ENCODE measurements at regions of chr2 and their contacts with region 1.

Region 1: GRCh38 chr2:239401067-239401880 is 454 bp upstream of the HDAC4 start:
- DNase-seq: peak; percentile 99
- H3K4me3 ChIP-seq: peak overlapping the region; percentile 77 to 78
- H3K27ac ChIP-seq: peak overlapping the region; percentile 100
- H3K4me1 ChIP-seq: no peaks in the 10 kb centered on the region
- H3K27me3 ChIP-seq: no peaks in the 10 kb centered on the region
- CTCF ChIP-seq: peak in 2 of 4 experiments; percentile 18 to 30
- POLR2A ChIP-seq: no peak

Region 2: DNA sequence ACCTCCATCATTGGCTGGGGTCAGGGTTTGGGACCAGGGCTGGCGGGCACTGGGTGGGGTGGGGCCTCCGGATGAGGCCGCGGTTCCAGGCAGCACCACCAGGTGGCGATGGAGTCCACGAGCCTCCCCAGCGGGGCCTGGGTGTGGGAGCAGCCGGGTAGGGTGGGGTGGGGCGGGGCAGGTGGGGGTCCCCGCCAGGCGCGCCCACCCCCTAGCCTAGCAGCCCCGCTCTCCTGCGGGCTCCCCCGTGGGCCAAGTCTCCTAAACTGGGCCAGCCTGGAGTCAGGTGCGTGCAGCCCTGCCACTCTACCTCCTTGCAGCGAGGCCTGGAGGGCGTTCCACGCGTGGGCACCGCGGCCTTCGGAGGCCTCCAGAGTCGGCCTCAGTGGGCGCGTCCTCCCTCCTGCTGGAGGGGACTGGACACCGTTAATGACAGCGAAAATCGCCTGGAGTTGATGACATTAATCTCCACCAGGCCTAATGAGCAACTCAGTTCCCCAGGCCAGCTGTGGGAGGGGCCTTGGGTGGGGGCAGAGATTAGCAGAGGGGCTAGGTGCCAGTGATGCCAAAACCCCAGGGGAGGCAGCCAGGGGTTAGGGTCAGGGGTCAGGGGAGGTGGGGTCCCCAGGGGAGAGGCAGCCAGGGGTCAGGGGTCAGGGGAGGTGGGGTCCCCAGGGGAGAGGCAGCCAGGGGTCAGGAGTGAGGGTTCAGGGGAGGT is 365.8 kb before region 1 on chr2:
- intact Hi-C with region 1: loop called (anchors 10 kb)
- DNase-seq: no peak
- H3K4me3 ChIP-seq: no peak overlapping the region
- H3K27ac ChIP-seq: no peak overlapping the region
- H3K4me1 ChIP-seq: no peaks in the 10 kb centered on the region
- H3K27me3 ChIP-seq: no peaks in the 10 kb centered on the region
- CTCF ChIP-seq: peak; percentile 65 to 92 (median 78)
- POLR2A ChIP-seq: no peak

Region 3: GRCh38 chr2:239143858-239144718 is 257.2 kb before region 1 on chr2:
- intact Hi-C with region 1: loop called (anchors 5 kb)
- DNase-seq: no peak
- H3K4me3 ChIP-seq: no peak overlapping the region
- H3K27ac ChIP-seq: no peak overlapping the region
- H3K4me1 ChIP-seq: no peaks in the 10 kb centered on the region
- H3K27me3 ChIP-seq: no peaks in the 10 kb centered on the region
- CTCF ChIP-seq: peak in 3 of 4 experiments; percentile 57 to 68 (median 59)
- POLR2A ChIP-seq: no peak

Region 4: DNA sequence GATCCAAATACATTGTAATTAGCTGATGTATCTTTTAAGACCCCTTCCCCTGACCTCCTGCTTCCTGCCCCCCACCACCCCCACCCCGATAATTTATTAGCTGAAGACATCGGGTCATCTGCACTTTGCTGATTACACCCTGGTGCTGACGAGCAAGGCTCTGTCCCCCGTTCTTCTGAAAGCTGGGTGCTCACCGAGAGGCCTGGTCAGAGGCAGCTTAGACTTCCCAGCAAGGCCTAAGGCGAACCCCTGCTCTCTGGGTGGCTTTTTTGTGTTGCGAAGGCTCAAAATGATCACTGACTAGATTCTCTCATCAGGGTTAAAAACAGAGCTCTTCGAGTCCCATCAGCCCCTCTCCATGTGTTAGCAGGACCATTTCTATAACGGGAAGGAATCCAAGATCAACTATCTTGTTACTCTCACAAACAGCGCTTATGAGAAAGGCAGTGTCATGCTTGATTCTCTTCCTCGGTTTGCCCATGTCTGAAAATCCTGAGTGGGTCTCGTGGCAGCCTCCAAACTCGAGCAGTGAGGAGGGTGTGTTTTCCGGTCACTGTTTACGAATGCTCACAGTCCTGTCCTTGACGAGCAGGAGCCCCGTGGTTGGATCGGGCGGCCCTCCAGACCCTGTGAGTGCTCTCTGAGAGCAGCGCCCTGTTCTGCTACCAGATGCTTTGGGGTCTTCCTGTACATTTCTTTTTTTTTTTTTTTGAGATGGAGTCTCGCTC is 202.1 kb before region 1 on chr2:
- intact Hi-C with region 1: loop called (anchors 5 kb)
- DNase-seq: no peak
- H3K4me3 ChIP-seq: no peak overlapping the region
- H3K27ac ChIP-seq: peak overlapping the region; percentile 62 to 75
- H3K4me1 ChIP-seq: no peaks in the 10 kb centered on the region
- H3K27me3 ChIP-seq: no peaks in the 10 kb centered on the region
- CTCF ChIP-seq: no peak
- POLR2A ChIP-seq: no peak

Region 5: GRCh38 chr2:239316562-239317465 is 84.5 kb before region 1 on chr2:
- intact Hi-C with region 1: no loop called
- DNase-seq: no peak
- H3K4me3 ChIP-seq: no peak overlapping the region
- H3K27ac ChIP-seq: peak overlapping the region; percentile 60 to 72
- H3K4me1 ChIP-seq: peaks cover 4% of the 10 kb centered on the region
- H3K27me3 ChIP-seq: no peaks in the 10 kb centered on the region
- CTCF ChIP-seq: peak in 1 of 4 experiments; percentile 5
- POLR2A ChIP-seq: no peak

Region 6: DNA sequence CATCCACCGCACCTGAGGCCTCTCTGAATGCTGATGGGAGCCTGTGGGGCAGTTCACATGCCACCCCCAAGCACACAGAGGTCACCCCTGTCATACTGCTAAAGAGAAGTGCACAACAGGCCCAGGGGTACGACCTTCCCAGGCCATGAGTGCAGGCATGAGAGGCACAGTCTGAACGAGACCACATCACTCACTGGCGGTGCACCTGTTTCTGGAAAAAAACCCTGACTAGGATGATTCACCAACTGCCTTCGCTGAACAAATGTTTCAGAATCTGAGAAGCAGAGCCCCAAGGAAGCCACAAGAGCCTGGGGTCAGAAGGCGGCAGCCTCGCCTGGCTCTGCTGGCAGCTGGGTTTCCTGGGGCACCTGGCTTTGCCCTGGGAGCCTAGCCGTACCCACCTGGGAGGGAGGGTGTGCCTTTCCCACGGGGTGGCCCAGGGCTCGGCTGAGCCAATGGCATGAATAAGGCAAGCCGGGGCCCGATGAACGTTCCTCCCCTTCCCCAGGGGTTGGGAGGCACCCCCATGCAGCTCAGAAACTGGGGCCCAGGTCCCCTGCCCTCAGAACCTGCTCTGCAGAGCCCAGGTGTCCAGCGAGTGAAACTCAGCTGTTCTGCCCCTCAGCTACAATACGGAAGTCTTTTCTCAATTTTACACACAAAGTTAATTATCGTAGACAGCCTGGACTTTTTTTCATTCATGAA is 74.3 kb before region 1 on chr2:
- intact Hi-C with region 1: loop called (anchors 5 kb)
- DNase-seq: no peak
- H3K4me3 ChIP-seq: no peak overlapping the region
- H3K27ac ChIP-seq: peak overlapping the region; percentile 65 to 68
- H3K4me1 ChIP-seq: peaks cover 12% of the 10 kb centered on the region
- H3K27me3 ChIP-seq: no peaks in the 10 kb centered on the region
- CTCF ChIP-seq: no peak
- POLR2A ChIP-seq: no peak

Region 7: DNA sequence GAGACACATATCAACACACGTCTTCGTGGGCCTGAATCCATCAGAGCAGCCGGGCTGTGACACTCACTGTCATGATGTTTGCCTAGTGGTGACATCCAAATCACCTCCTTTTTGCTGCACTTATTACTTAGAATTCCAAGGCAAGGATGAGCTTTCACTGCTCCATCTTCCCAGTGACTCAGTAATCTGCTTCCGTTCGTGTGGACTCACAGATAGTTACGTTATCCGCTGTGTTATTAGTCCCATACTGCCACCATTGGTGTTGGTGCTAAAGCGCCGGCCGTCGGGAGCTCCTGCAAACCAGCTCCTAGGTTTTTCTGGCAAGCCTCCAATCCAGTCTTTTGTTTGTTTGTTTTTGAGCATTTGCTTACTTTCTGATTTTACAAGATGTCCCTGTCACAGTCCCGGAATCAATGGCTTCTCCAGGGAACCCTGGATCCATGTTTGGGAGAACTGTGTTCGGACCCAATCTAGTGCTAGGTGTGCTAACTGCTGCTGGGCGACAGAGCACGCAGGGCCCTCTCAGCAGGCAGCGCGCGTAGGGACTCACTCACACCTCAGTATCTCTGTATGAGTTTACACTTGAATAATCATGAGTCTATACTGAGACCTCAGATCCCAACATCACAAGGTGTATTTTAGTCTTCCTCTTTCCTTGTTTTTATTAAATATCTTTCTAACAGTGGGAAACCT is 43.1 kb before region 1 on chr2:
- intact Hi-C with region 1: loop called (anchors 5 kb)
- DNase-seq: no peak
- H3K4me3 ChIP-seq: no peak overlapping the region
- H3K27ac ChIP-seq: no peak overlapping the region
- H3K4me1 ChIP-seq: peaks cover 4% of the 10 kb centered on the region
- H3K27me3 ChIP-seq: no peaks in the 10 kb centered on the region
- CTCF ChIP-seq: no peak
- POLR2A ChIP-seq: no peak

Region 8: GRCh38 chr2:239991689-239992314 is 590.5 kb after region 1 on chr2:
- intact Hi-C with region 1: loop called (anchors 10 kb)
- DNase-seq: peak; percentile 36
- H3K4me3 ChIP-seq: no peak overlapping the region
- H3K27ac ChIP-seq: no peak overlapping the region
- H3K4me1 ChIP-seq: no peaks in the 10 kb centered on the region
- H3K27me3 ChIP-seq: no peaks in the 10 kb centered on the region
- CTCF ChIP-seq: peak; percentile 48 to 86 (median 80)
- POLR2A ChIP-seq: no peak